A549 (cell line): ENCODE measurements at regions of chr2 and their contacts with region 1.

Region 1: DNA sequence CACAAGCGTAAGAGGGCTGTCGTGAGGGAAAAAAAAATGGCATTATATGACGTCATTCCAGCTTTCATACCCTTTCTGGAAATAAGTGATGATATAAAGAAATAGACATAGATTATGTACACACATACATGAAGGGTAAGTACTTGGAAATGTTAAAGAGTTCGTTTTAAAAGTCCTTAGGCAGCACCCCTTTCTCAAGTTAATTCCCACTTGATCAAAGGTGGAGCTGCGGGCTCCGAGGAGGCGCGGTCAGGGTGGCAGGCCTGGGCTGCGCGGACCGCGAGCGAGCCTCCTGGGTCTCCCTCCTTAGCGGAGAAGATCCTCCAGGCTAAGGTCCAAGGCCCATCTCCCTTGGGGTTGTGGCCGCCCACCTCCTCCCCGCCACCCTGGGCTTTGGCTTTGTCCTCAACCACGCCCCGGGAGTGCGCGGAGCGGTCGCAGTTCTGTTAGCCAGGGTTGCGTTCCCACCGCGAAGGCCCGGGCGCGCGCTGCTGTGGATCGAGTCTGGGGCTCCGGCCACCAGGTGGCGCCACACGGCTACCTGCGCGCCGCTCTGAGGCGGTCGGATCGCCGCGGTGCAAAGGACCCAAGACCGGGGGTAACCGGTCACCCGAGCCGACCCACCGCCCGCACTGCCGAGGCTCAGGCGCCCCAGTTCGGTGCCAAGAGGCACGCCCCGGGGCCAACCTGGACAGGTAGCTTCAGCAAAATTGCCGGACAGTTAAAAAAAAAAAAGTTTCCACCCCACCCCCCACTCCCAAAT is 66.8 kb downstream of the HNRNPLL start:
- DNase-seq: peak; percentile 76 to 82
- ATAC-seq: peak; percentile 92 to 97
- H3K4me3 ChIP-seq: peak overlapping the region; percentile 68
- H3K27ac ChIP-seq: peak overlapping the region; percentile 71 to 86
- H3K4me1 ChIP-seq: 0 out of 3 replicates have a peak, but pooled peaks cover 3% of the 10 kb centered on the region
- CTCF ChIP-seq: peak; percentile 97
- EP300 ChIP-seq: no peak
- POLR2A ChIP-seq: no peak
- RAD21 ChIP-seq: peak; percentile 82 to 95

Region 2: DNA sequence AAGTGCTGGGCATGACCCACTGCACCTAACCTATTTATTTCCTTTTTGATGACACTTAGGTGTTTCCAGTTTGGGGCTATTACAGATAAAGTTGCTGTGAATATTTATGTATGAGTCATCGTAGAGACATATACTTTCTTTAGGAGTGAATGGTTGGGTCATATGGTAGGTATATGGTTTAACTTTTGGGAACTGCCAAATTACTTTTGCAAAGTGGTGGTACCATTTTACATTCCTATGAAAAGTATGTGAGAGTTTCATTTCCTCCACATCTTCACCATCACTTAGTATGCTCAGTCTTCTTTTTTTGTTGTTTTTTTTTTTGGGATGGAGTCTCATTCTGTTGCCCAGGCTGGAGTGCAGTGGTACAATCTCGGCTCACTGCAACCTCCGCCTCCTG is 10.7 kb after region 1 on chr2:
- CTCF ChIA-PET with region 1: interaction called, 24 read pairs
- POLR2A ChIA-PET with region 1: no interaction called
- DNase-seq: no peak
- ATAC-seq: no peak
- H3K4me3 ChIP-seq: no peak overlapping the region
- H3K27ac ChIP-seq: no peak overlapping the region
- H3K4me1 ChIP-seq: peaks cover 21% of the 10 kb centered on the region
- CTCF ChIP-seq: no peak
- EP300 ChIP-seq: no peak
- POLR2A ChIP-seq: no peak
- RAD21 ChIP-seq: no peak

Region 3: GRCh38 chr2:38554973-38555595 is 19.2 kb after region 1 on chr2:
- CTCF ChIA-PET with region 1: interaction called, 28 read pairs
- POLR2A ChIA-PET with region 1: no interaction called
- DNase-seq: peak; percentile 31 to 54
- ATAC-seq: peak; percentile 87 to 89
- H3K4me3 ChIP-seq: no peak overlapping the region
- H3K27ac ChIP-seq: no peak overlapping the region
- H3K4me1 ChIP-seq: no peaks in the 10 kb centered on the region
- CTCF ChIP-seq: peak; percentile 58
- EP300 ChIP-seq: no peak
- POLR2A ChIP-seq: no peak
- RAD21 ChIP-seq: peak; percentile 37; a peak in 3 of 5 replicates

Region 4: DNA sequence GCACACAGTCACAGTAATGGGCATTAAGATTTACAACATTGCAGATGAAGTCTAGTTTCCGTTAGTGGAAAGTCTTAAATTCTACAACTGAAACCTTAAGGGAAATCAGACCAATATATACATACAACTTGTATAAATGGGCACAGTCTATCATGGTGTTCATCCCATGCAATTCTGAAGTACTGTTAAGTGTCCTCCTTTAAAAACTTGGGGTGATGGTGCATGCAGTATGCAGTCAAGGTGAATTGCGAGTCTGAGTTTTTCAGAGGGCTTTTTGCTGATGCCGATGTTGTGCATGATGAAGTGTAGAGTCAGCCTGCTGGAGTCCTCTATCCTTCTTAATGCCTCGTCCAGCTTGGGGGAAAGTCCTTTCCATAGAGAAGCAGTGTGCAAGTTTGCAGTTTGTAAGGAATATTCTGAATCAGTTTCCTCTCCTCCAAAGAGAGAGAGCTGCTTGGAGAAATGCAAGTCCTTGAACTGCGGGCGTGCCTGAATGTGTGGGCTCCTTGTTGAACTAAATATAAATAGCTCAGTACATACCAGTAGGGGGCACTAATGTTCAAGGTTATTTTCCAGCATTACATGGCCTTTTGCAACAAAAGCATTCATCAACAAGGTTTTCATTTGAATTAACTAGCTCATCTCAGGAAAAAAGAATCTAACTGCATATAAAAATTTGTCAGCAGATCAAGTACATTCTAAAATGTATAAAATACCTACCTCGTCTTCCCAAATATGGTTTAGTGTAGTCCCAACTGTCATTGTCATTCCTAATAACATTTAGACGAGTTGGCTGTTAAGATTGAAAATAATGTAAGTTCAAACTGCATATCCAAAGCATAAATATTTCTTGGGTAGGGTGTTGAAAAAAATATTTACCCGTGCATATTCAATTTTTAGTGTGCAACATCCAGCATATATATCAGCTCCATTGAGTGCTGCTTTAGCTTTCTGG is 45.5 kb after region 1 on chr2:
- CTCF ChIA-PET with region 1: interaction called, 30 read pairs
- POLR2A ChIA-PET with region 1: no interaction called
- DNase-seq: peak in 1 of 2 experiments; percentile 83
- ATAC-seq: peak; percentile 91 to 97
- H3K4me3 ChIP-seq: no peak overlapping the region
- H3K27ac ChIP-seq: no peak overlapping the region
- H3K4me1 ChIP-seq: peaks cover 3% of the 10 kb centered on the region; the same call in 1 of the 3 replicates
- CTCF ChIP-seq: peak; percentile 94
- EP300 ChIP-seq: no peak
- POLR2A ChIP-seq: no peak
- RAD21 ChIP-seq: peak; percentile 89 to 91

Region 5: GRCh38 chr2:38720613-38721241 is 184.8 kb after region 1 on chr2:
- CTCF ChIA-PET with region 1: interaction called, 19 read pairs
- POLR2A ChIA-PET with region 1: no interaction called
- DNase-seq: peak in 1 of 2 experiments; percentile 70
- ATAC-seq: peak in 1 of 2 experiments; percentile 23; a peak in 3 of 6 replicates
- H3K4me3 ChIP-seq: no peak overlapping the region
- H3K27ac ChIP-seq: peak overlapping the region in 1 of 2 experiments; percentile 38; a peak in 2 of 6 replicates
- H3K4me1 ChIP-seq: peaks cover 30% of the 10 kb centered on the region
- CTCF ChIP-seq: no peak
- EP300 ChIP-seq: no peak
- POLR2A ChIP-seq: no peak
- RAD21 ChIP-seq: no peak

Region 6: GRCh38 chr2:38734299-38735058 is 198.6 kb after region 1 on chr2:
- CTCF ChIA-PET with region 1: interaction called, 60 read pairs
- POLR2A ChIA-PET with region 1: no interaction called
- DNase-seq: no peak
- ATAC-seq: peak in 1 of 2 experiments; percentile 16; a peak in 2 of 6 replicates
- H3K4me3 ChIP-seq: no peak overlapping the region
- H3K27ac ChIP-seq: no peak overlapping the region
- H3K4me1 ChIP-seq: no peaks in the 10 kb centered on the region
- CTCF ChIP-seq: no peak
- EP300 ChIP-seq: no peak
- POLR2A ChIP-seq: no peak
- RAD21 ChIP-seq: no peak

Region 7: DNA sequence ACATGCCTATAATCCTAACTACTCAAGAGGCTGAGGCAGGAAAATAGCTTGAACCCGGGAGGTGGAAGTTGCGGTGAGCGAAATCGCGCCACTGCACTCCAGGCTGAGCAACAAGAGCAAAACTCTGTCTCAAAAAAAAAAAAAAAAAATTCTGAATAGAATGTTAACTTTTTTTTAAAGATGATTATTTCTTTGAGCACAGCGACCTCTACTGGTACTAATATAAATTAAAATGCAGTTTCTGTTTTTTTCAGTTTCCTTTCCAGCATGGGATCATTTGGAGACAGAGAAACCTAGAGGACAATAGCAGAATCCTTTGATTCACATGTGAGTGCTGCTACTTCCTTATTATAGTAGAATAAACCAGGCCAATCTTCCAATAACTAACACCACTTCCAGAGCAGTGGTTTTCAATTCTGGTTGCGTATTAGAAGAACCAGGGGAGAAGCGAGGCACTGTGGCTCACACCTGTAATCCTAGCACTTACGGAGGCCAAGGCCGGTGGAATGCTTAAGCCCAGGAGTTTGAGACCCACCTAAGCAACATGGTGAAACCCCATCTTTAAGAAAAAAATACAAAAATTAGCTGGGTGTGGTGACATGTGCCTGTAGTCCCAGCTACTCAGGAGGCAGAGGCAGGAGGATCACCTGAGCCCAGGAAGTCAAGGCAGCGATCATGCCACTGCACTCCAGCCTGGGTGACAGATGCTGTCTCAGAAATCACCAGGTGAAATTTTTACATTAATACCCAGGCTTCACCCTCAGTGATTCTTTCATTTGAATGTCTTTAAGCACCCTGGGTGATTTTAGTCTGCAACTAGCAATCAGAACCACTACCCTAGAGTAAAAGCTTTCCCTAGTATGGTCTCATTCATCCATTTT is 205.2 kb after region 1 on chr2:
- CTCF ChIA-PET with region 1: interaction called, 60 read pairs
- POLR2A ChIA-PET with region 1: interaction called, 3 read pairs
- DNase-seq: peak; percentile 61 to 73
- ATAC-seq: peak; percentile 60 to 64; a peak in 5 of 6 replicates
- H3K4me3 ChIP-seq: no peak overlapping the region
- H3K27ac ChIP-seq: no peak overlapping the region
- H3K4me1 ChIP-seq: peaks cover 24% of the 10 kb centered on the region
- CTCF ChIP-seq: peak; percentile 80
- EP300 ChIP-seq: no peak
- POLR2A ChIP-seq: no peak
- RAD21 ChIP-seq: peak; percentile 48 to 74